AG04450 (cell line): ENCODE measurements at regions of chr6 and their contacts with region 1.

Region 1: DNA sequence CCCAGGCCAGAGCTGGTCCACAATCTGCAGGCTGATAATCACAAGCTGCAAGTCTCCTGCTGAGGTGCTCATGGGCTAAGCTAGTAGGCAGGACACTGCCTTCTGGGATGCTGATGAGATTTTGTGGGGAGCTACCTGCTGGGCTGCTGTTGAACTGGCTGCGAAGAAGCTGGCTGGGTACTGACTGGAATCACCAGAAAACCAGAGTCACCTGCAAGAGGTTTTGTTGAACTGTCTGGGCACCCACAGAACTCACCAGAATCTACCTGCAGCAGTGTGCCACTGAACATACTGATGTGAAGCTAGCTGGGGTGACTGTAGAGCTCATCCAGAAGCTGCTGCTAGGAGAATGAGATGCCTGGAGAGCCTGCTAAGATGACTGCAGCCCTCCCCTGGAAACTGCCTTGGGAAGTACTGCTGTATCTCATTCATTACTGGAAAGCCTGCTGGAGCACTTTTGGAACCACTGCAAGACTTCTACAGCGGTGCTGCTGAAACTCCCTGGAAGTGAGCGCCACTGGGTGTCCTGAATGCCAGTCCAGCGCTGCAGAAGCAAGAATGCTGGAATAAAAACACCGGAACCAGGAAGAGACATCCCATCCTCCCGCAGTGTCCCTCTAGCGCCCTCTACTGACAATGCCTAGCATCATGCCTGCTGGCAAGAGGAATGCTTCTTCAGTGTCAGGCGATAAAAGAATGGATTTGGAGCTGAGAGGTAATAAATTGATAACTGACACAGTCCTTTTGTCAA is 64.9 kb upstream of the ARHGAP18 start:
- DNase-seq: peak; percentile 52
- H3K4me3 ChIP-seq: no peak overlapping the region; the same call in 1 of the 2 replicates
- H3K27ac ChIP-seq: no peak overlapping the region
- H3K27me3 ChIP-seq: no peaks in the 10 kb centered on the region
- CTCF ChIP-seq: peak; percentile 99

Region 2: DNA sequence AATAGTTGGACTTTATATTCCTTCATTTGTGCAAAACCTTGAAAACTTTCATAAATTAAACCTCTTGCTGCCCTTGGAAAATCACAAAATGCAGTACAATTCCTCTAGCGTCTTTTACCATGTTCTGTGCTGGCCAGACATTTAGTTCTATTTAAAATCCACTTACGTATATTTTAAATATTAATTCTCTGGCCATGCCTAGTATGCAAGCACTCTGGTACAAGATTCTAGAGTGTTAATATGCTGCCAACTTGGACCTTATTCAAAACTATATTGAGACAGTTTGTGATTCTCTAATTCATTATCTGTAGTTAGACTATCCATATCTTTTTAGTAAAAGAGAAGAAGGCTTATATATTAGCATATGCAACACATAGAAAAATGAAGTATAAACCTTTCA is 393.0 kb before region 1 on chr6:
- CTCF ChIA-PET with region 1: no interaction called
- POLR2A ChIA-PET with region 1: no interaction called
- DNase-seq: no peak
- H3K4me3 ChIP-seq: no peak overlapping the region
- H3K27ac ChIP-seq: no peak overlapping the region
- H3K27me3 ChIP-seq: peaks cover 7% of the 10 kb centered on the region
- CTCF ChIP-seq: no peak

Region 3: GRCh38 chr6:129498950-129499842 is 275.7 kb before region 1 on chr6:
- CTCF ChIA-PET with region 1: interaction called, 12 read pairs
- POLR2A ChIA-PET with region 1: no interaction called
- DNase-seq: no peak
- H3K4me3 ChIP-seq: no peak overlapping the region
- H3K27ac ChIP-seq: no peak overlapping the region
- H3K27me3 ChIP-seq: no peaks in the 10 kb centered on the region
- CTCF ChIP-seq: peak; percentile 59

Region 4: DNA sequence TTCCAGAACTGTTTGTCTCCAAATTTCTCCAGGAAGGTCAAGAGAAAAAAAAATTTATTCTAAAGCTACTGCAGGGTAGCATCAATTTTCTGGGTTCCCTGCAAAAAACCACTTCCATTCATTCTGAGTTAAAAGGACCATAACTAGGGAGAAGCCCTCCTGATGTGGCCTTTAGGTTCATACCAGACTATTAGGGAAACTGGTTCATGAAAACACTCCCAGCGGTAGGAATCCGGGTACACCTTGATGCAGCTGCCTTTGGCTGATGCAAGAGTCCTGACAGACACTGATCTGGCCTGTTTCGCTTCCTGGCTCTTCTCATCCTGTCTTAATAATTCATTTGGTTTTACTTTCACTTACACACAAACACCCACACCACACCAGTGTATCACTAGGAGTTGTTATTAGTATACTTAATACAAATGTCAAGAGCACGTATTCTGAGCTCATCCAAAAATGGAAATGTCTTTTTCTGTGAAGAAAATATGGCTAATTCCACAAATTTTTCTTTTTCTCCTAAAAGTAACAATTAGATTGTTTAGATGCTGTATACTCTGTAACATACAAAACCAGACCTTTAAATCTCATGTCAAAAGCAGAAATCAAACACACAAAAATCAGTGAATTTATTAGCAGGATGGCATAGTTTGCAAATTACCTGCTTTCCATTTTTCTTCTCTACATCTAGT is 26.5 kb before region 1 on chr6:
- CTCF ChIA-PET with region 1: interaction called, 15 read pairs
- POLR2A ChIA-PET with region 1: no interaction called
- DNase-seq: no peak
- H3K4me3 ChIP-seq: no peak overlapping the region
- H3K27ac ChIP-seq: peak overlapping the region; percentile 53
- H3K27me3 ChIP-seq: no peaks in the 10 kb centered on the region
- CTCF ChIP-seq: no peak

Region 5: DNA sequence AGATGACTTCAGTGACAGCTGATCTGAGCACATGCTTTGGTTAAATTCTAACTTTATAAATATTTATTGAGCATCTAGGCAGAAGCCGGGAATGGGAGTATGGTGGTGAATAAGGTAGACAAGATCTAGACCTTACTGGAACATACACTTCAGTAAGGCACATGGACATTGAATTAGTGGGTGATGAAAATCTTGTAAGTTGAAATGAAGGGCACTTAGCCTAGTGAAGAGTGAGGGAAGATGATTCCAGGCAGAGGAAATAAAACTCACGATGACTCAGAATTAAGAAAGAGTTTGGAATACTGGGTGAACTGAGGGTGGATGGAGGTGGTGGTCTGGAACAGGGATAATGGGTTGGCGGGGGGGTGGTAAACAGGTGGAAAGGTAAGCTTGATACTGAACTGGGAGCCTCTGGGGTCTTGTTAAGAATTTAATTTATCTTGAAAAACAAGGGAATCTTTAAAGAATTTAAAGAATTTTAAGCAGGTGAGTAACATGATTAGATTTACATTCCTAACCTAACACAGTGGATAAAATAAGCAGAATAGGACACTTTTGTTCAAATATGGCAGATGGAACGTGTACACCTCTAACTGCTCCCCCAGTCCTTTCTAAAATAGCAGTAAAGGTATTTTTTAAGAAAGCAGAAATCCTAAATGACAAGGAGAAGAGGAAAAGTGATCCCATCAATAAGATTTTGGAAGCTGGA is 10.3 kb after region 1 on chr6:
- CTCF ChIA-PET with region 1: interaction called, 41 read pairs
- POLR2A ChIA-PET with region 1: no interaction called
- DNase-seq: no peak
- H3K4me3 ChIP-seq: no peak overlapping the region
- H3K27ac ChIP-seq: no peak overlapping the region
- H3K27me3 ChIP-seq: no peaks in the 10 kb centered on the region
- CTCF ChIP-seq: no peak

Region 6: GRCh38 chr6:130020907-130021629 is 246.2 kb after region 1 on chr6:
- CTCF ChIA-PET with region 1: interaction called, 26 read pairs
- POLR2A ChIA-PET with region 1: no interaction called
- DNase-seq: peak; percentile 89
- H3K4me3 ChIP-seq: peak overlapping the region; percentile 74
- H3K27ac ChIP-seq: peak overlapping the region; percentile 41
- H3K27me3 ChIP-seq: no peaks in the 10 kb centered on the region
- CTCF ChIP-seq: peak; percentile 91